ENCODE measurements at regions of chr19 and their contacts with region 1.

Region 1: DNA sequence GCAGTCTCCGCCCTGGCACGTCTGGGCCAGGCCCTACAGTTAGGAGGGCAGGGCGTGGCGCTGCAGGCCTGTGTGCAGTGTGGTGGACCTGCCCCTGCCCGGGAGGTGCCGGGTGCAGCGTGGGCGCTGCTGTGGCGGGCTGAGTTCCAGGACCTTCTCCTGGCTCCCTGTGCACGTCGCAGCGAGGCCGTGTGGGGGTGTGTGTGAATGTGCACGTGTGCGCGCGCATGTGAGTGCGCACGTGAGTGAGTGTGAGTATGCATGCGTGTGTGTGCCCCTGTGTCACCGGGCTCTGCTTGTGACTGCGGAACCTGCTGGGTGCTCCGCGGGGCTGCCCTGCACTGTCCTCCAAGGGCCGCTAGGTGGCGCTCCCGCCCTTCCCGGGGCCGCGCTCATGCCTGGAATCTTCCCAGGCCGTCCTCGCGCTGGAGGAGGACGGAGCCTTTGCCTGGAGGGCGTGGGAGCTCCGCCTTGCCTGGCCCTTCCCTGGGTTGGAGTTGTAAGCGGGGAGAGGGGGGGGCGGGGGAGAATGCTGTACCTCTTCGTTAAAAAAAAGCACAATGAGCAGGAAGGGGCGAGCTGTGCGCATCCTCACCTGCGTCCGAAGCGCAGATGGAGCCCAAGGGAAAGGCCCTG is 79.3 kb downstream of the KDM4B start:
- DNase-seq: peak; percentile 79 to 92 (median 87)
- H3K4me3 ChIP-seq: peak overlapping the region in 1 of 4 donors; percentile 9
- H3K27ac ChIP-seq: peak overlapping the region in 3 of 5 donors; percentile 51 to 80 (median 73)
- H3K4me1 ChIP-seq: peaks cover 15 to 37% of the 10 kb centered on the region in 2 donors
- H3K27me3 ChIP-seq: no peaks in the 10 kb centered on the region
- CTCF ChIP-seq: peak; percentile 97 to 100 (median 98)
- POLR2A ChIP-seq: no peak

Region 2: DNA sequence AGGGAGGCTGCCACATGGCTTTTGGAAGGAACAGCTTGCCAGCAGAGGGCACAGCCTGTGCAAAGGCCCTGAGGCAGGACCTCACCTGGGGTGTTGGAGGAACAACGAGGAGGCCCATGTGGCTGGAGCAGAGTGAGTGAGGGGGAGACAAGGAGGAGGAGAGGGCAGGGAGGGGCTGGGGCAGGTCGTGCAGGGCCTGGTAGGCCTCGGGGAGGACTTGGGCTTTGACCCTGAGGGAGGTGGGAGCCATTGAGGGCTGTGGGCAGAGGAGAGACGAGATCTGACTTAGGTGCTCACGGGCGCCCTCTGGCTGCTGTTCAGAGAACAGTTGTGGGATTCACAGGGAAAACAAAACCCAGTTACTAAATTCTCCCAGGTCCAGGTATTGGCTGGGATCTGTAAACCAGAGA is 432.2 kb after region 1 on chr19:
- intact Hi-C with region 1: loop called in 1 of 2 experiments (anchors 10 kb)
- DNase-seq: peak in 6 of 7 donors; percentile 18 to 58 (median 25)
- H3K4me3 ChIP-seq: no peak overlapping the region
- H3K27ac ChIP-seq: no peak overlapping the region
- H3K4me1 ChIP-seq: no peaks in the 10 kb centered on the region
- H3K27me3 ChIP-seq: peaks cover 11% of the 10 kb centered on the region
- CTCF ChIP-seq: peak; percentile 10 to 48 (median 36)
- POLR2A ChIP-seq: no peak

Region 3: DNA sequence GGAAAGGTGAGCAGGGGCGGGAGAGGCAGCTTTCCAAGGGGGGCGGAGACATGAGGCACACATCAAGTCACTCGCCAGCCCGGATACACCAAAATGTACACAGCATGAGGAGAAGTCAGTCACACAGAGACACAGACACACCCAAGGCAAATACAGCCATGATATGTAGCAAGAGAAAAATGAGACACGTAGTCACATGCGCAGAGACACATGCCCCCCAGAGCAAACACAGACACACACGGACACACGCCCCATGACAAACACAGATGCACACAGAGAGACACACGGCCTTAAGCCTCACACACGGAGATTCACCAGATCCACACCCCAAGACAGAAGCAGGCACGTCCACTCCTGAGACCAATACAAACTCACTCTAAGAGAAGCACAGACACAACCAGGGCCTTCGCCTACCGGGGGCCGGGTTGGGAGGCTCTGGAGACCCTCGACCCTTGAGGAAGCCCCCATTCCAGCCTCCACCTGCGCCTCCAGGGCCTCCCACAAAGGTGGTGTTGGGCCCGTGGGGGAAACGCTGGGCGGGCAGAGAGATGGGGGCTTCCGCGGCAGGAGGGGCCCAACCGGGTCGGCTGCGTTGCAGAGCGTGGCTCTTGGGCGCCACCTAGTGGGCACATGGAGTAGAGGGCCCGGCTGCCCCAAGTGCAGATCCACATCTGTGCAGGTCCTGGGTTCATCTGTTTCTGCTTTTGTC is 529.7 kb after region 1 on chr19:
- intact Hi-C with region 1: loop called (anchors 5 to 10 kb)
- DNase-seq: peak in 6 of 7 donors; percentile 54 to 78 (median 65)
- H3K4me3 ChIP-seq: no peak overlapping the region
- H3K27ac ChIP-seq: no peak overlapping the region
- H3K4me1 ChIP-seq: peaks cover 0 to 7% of the 10 kb centered on the region in 2 donors
- H3K27me3 ChIP-seq: no peaks in the 10 kb centered on the region
- CTCF ChIP-seq: peak; percentile 76 to 100 (median 92)
- POLR2A ChIP-seq: no peak